ENCODE measurements at regions of chr11 and their contacts with region 1.

Region 1: DNA sequence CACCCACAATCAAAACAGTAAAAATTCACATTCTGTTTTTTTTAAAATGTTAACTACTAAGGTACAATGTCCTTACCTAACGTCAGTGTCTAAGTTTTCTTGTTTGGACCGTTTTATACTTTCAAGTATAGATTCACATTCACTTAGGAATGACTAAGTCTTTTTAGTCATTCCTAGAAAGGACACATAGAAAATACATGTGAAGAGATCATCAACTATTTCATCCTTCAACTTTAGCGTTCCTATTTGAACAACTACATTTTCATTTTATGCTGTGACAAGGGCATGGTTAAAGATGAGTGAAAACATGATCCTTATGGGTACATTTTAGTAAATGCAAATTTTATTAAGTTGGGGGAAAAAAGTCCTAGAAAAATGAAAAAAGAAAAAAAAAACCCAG is 62.8 kb downstream of the DDX10 start:
- DNase-seq: no peak

Region 2: GRCh38 chr11:108715239-108715638 is 12.4 kb before region 1 on chr11:
- CTCF ChIA-PET with region 1: interaction called, 13 read pairs
- POLR2A ChIA-PET with region 1: no interaction called
- DNase-seq: no peak

Measured in HEK293T (cell line).